ENCODE measurements at regions of chr9 and their contacts with region 1.

Region 1: GRCh38 chr9:111631071-111631971 is at the start of gene DNAJC25:
- DNase-seq: peak; percentile 92 to 99 (median 96)
- ATAC-seq: peak; percentile 94
- H3K4me3 ChIP-seq: peak within 1 kb of the TSS; percentile 50 to 69
- H3K4me3 Mint-ChIP-seq: peak within 1 kb of the TSS; percentile 98
- H3K27ac ChIP-seq: peak within 1 kb of the TSS; percentile 78 to 80
- H3K27ac Mint-ChIP-seq: peak within 1 kb of the TSS; percentile 92
- H3K4me1 ChIP-seq: peaks cover 18% of the 10 kb centered on the region
- H3K4me1 Mint-ChIP-seq: peaks cover 47% of the 10 kb centered on the region
- H3K27me3 ChIP-seq: no peaks in the 10 kb centered on the region
- H3K27me3 Mint-ChIP-seq: no peaks in the 10 kb centered on the region
- CTCF ChIP-seq: no peak
- total RNA-seq, gene DNAJC25: 5.8 to 7.2 TPM

Region 2: GRCh38 chr9:111483862-111484571 is 147.3 kb before region 1 on chr9 and contains the start of gene ECPAS:
- CTCF ChIA-PET with region 1: interaction called, 3 read pairs
- POLR2A ChIA-PET with region 1: interaction called, 6 read pairs
- intact Hi-C with region 1: loop called (anchors 1 kb)
- DNase-seq: peak; percentile 35 to 79 (median 63)
- ATAC-seq: peak; percentile 64
- H3K4me3 ChIP-seq: peak within 1 kb of the TSS; percentile 90 to 99
- H3K4me3 Mint-ChIP-seq: peak within 1 kb of the TSS; percentile 86
- H3K27ac ChIP-seq: peak within 1 kb of the TSS; percentile 81 to 85
- H3K27ac Mint-ChIP-seq: peak within 1 kb of the TSS; percentile 81
- H3K4me1 ChIP-seq: peaks cover 7% of the 10 kb centered on the region
- H3K4me1 Mint-ChIP-seq: peaks cover 29% of the 10 kb centered on the region
- H3K27me3 ChIP-seq: no peaks in the 10 kb centered on the region
- H3K27me3 Mint-ChIP-seq: no peaks in the 10 kb centered on the region
- CTCF ChIP-seq: no peak
- total RNA-seq, gene ECPAS: 36.4 to 44.6 TPM

Region 3: DNA sequence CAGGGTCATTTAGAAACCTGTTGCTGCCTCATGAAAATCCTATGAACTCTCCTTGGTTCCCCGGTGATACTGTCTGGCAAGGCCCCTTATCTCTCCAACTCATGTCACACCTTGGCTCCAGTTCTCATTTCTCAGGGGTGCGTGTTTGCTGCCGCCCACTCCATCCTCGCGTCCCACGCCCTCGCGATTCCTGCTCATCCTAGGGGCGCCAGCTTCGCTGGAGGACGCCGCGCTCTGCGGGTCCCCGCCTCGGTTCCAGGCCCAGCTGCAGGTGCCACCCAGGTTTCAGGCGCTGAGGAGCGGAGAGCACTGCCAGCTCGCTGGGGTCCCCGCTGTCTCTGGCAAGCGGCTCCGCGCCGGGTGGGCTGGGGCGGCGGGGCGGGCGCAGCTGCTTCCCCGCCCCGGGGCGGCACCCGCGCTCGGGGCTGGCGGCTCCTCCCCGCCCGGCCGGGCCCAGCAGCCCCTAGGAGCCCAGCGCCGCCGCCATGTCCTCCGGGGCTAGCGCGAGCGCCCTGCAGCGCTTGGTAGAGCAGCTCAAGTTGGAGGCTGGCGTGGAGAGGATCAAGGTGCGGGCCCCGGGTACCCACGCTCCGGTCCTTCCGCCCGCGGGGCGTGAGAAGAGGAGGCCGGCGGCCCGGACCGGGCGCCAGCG is 30.0 kb after region 1 on chr9 and contains the start of gene GNG10:
- CTCF ChIA-PET with region 1: interaction called, 3 read pairs
- POLR2A ChIA-PET with region 1: interaction called, 16 read pairs
- intact Hi-C with region 1: loop called (anchors 1 kb)
- DNase-seq: peak; percentile 48 to 82 (median 66)
- ATAC-seq: peak; percentile 95
- H3K4me3 ChIP-seq: peak within 1 kb of the TSS; percentile 70 to 95
- H3K4me3 Mint-ChIP-seq: peak within 1 kb of the TSS; percentile 95
- H3K27ac ChIP-seq: peak within 1 kb of the TSS; percentile 55 to 57
- H3K27ac Mint-ChIP-seq: peak within 1 kb of the TSS; percentile 92
- H3K4me1 ChIP-seq: peaks cover 24% of the 10 kb centered on the region
- H3K4me1 Mint-ChIP-seq: peaks cover 40% of the 10 kb centered on the region
- H3K27me3 ChIP-seq: no peaks in the 10 kb centered on the region
- H3K27me3 Mint-ChIP-seq: no peaks in the 10 kb centered on the region
- CTCF ChIP-seq: no peak
- total RNA-seq, gene GNG10: 1.6 to 2.6 TPM

Region 4: DNA sequence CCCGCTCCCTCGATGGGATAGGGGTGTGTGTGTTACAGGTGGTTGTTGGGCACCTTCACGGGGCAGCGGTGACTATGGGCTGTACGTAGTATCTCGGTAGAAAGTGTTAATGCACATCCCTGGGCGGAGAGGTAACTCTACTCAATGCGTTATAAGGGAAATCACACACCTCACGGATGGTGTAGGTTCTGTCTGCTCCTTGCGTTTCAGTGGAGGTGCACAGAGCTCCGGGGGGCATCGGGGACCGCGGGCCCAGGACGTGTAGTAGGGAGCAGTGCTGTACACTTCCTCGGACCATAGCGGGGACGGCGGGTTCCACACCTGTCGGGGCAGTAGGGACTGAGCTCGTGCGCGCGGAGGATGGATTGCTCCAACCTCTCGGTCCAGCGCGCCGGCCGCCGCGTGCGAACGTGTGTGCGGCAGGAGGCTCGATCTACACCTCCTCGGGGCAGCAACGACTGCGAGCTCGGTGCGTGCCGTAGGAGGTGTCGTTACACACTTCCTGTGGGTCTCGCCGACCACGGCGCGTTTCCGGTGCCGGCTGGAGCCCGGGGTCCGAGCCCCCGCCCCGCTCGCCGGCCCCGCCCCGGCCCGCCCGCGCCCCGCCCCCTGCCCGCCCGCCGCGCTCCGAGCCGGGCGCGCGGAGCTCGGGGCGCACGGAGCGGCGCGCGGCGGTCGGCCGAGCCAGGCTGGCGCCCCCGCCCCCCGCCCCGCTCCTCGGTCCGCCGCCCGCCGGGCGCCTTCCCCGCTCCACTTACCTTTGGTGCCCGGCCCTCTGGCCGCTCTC is 855.1 kb after region 1 on chr9 and contains the start of gene KIAA1958:
- CTCF ChIA-PET with region 1: no interaction called
- POLR2A ChIA-PET with region 1: interaction called, 5 read pairs
- intact Hi-C with region 1: loop called (anchors 1 to 10 kb)
- DNase-seq: peak; percentile 50 to 91 (median 81)
- ATAC-seq: peak; percentile 74
- H3K4me3 ChIP-seq: peak within 1 kb of the TSS; percentile 77 to 81
- H3K4me3 Mint-ChIP-seq: peak within 1 kb of the TSS; percentile 97
- H3K27ac ChIP-seq: peak within 1 kb of the TSS; percentile 77 to 78
- H3K27ac Mint-ChIP-seq: peak within 1 kb of the TSS; percentile 94
- H3K4me1 ChIP-seq: peaks cover 12% of the 10 kb centered on the region
- H3K4me1 Mint-ChIP-seq: peaks cover 42% of the 10 kb centered on the region
- H3K27me3 ChIP-seq: no peaks in the 10 kb centered on the region
- H3K27me3 Mint-ChIP-seq: no peaks in the 10 kb centered on the region
- CTCF ChIP-seq: no peak
- total RNA-seq, gene KIAA1958: 7.2 to 7.5 TPM

Region 5: DNA sequence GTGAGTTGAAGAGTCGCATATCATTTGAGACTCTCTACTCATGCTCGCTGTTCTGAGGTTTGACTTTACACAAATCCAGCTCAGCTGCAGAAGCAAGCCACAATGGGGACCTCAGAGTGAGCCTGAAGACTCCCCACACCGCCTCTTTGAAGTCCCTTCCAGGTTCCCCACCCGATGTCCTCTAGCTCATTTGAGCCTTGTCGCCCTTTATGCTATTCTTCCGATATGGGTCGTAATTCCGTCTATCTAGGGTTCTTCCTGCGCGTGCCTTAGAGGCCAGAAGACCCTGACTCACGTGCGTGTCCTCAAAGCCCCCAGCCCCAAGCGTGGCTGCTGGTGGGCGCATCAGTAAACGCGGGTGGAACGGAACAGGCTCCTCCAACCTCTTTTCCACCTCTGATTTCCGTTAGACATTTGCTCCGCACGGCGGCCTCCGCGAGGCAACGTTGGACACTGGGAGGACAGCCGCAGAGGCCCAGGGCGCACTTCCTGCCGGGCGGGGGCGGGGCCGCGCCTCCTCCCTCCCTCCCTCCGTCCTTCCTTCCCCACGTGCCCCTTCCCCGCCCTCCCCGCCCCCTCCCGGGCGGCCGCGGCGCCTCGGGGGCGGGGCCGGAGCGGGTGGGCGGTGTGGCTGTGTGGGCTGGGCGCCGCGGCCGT is 1118.9 kb after region 1 on chr9 and contains the start of gene SNX30:
- CTCF ChIA-PET with region 1: no interaction called
- POLR2A ChIA-PET with region 1: no interaction called
- intact Hi-C with region 1: loop called in 1 of 2 experiments (anchors 5 kb)
- DNase-seq: peak; percentile 42 to 91 (median 78)
- ATAC-seq: peak; percentile 67
- H3K4me3 ChIP-seq: peak within 1 kb of the TSS; percentile 66 to 72
- H3K4me3 Mint-ChIP-seq: peak within 1 kb of the TSS; percentile 91
- H3K27ac ChIP-seq: peak within 1 kb of the TSS; percentile 44 to 83
- H3K27ac Mint-ChIP-seq: peak within 1 kb of the TSS; percentile 94
- H3K4me1 ChIP-seq: peaks cover 47% of the 10 kb centered on the region
- H3K4me1 Mint-ChIP-seq: peaks cover 64% of the 10 kb centered on the region
- H3K27me3 ChIP-seq: no peaks in the 10 kb centered on the region
- H3K27me3 Mint-ChIP-seq: no peaks in the 10 kb centered on the region
- CTCF ChIP-seq: no peak
- total RNA-seq, gene SNX30: 6.0 to 8.1 TPM

Region 6: DNA sequence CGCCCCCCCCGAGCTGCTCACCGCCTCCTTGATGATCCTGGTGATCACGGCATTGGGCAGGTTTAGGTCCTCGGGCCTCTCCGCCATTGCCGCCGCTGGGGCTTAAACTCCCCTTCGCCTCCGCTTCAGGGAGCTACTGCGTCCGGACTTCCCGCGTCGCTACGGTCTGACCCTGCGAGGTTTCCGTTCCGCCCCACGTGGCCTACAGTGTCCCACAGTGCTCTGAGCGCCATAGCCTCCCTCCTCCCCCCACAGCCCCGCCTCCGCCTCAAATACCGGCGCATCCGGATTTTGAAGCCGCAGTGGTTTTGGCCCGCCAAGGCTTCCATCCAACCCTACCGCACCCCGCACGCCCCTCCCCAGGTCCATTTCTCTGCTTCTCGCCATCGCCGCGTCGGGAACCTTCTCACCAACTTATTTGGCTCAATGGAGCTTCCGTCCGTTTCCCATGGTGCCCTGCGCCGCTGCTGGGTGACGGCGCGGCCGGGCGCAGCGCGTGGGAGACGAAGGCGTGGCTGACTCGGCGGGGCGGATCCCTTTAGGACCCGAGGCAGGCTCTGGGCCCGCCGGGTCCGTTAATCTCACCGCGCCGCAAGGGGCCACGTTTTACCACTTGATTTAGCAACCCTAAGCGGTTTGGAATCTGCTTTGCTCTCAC is 1779.0 kb after region 1 on chr9 and contains the starts of genes C9orf43 and POLE3:
- CTCF ChIA-PET with region 1: no interaction called
- POLR2A ChIA-PET with region 1: no interaction called
- intact Hi-C with region 1: loop called in 1 of 2 experiments (anchors 5 kb)
- DNase-seq: peak; percentile 90 to 97 (median 94)
- ATAC-seq: peak; percentile 88
- H3K4me3 ChIP-seq: peak within 1 kb of the TSS; percentile 88 to 94
- H3K4me3 Mint-ChIP-seq: peak within 1 kb of the TSS; percentile 99
- H3K27ac ChIP-seq: peak within 1 kb of the TSS; percentile 84 to 99
- H3K27ac Mint-ChIP-seq: peak within 1 kb of the TSS; percentile 99
- H3K4me1 ChIP-seq: peaks cover 22% of the 10 kb centered on the region
- H3K4me1 Mint-ChIP-seq: peaks cover 29% of the 10 kb centered on the region
- H3K27me3 ChIP-seq: no peaks in the 10 kb centered on the region
- H3K27me3 Mint-ChIP-seq: no peaks in the 10 kb centered on the region
- CTCF ChIP-seq: no peak
- total RNA-seq, gene C9orf43: 0.61 to 0.73 TPM
- total RNA-seq, gene POLE3: 77.4 to 79.3 TPM